Endothelial cell of umbilical vein (primary cell): ENCODE measurements at regions of chr18 and their contacts with region 1.

Region 1: DNA sequence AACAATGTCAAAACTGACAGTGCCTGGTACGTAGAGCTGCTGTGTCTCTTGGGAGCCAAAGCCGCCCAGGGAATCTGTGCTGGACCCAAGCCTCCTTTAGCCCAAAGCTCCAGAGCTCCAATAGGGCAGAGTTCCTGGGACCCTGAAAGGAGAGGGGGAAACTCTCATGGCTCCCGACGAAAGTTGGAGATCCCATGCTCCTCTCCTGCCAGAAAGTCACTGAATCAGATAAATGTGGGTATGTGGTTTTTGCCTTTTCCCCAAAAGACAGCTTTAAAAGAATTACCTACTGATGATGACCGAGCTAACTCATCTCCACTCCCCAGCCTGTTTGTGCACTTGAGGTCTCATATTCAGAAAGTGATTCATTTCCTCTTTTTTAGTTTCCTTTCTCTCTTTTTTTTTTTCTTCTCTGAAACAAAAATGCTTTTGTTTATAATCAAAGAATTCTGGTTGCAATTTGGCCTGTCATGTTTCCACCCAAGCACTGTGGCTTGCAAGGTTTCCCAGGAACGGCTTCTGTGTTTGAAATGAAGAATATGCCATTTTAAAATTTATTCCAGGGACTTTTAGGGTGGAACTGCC is 14.1 kb upstream of the PMAIP1 start:
- DNase-seq: peak; percentile 72
- H3K4me3 ChIP-seq: peak overlapping the region in 1 of 3 experiments; percentile 39
- H3K27ac ChIP-seq: peak overlapping the region; percentile 89
- H3K4me1 ChIP-seq: peaks cover 41% of the 10 kb centered on the region
- H3K27me3 ChIP-seq: no peaks in the 10 kb centered on the region
- CTCF ChIP-seq: no peak
- POLR2A ChIP-seq: no peak

Region 2: GRCh38 chr18:58998401-58999203 is 887.1 kb before region 1 on chr18:
- CTCF ChIA-PET with region 1: no interaction called
- POLR2A ChIA-PET with region 1: no interaction called
- dilution Hi-C with region 1: no loop called
- intact Hi-C with region 1: loop called (anchors 5 kb)
- DNase-seq: no peak
- H3K4me3 ChIP-seq: no peak overlapping the region
- H3K27ac ChIP-seq: no peak overlapping the region
- H3K4me1 ChIP-seq: peaks cover 23% of the 10 kb centered on the region
- H3K27me3 ChIP-seq: no peaks in the 10 kb centered on the region
- CTCF ChIP-seq: no peak
- POLR2A ChIP-seq: no peak

Region 3: DNA sequence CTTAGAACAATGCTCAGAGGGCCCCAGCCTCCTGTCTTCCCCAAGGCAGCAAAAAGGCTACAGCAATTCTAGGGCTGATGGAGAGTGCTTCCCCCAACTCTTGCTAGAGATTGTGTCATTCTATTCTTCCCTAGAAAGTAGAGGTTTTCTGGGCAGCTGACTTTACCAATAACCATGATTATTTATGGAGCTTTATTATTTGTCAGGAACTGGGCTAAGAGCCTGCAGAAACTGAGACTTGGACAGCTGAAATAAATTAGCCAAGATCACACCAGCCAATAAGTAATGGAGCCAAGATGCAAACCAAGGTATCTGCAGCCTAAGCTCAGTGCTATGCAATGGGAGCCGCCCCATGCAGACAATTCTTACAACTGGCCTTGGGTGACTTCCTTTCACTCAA is 273.3 kb before region 1 on chr18:
- CTCF ChIA-PET with region 1: no interaction called
- POLR2A ChIA-PET with region 1: no interaction called
- dilution Hi-C with region 1: no loop called
- intact Hi-C with region 1: no loop called
- DNase-seq: no peak
- H3K4me3 ChIP-seq: no peak overlapping the region
- H3K27ac ChIP-seq: no peak overlapping the region
- H3K4me1 ChIP-seq: no peaks in the 10 kb centered on the region
- H3K27me3 ChIP-seq: no peaks in the 10 kb centered on the region
- CTCF ChIP-seq: no peak
- POLR2A ChIP-seq: no peak

Region 4: GRCh38 chr18:59874166-59874565 is 11.5 kb before region 1 on chr18:
- CTCF ChIA-PET with region 1: interaction called, 9 read pairs
- POLR2A ChIA-PET with region 1: interaction called, 3 read pairs
- dilution Hi-C with region 1: no loop called
- intact Hi-C with region 1: loop called (anchors 1 kb)
- DNase-seq: peak; percentile 73
- H3K4me3 ChIP-seq: peak overlapping the region in 1 of 3 experiments; percentile 6
- H3K27ac ChIP-seq: peak overlapping the region; percentile 85
- H3K4me1 ChIP-seq: peaks cover 19% of the 10 kb centered on the region
- H3K27me3 ChIP-seq: no peaks in the 10 kb centered on the region
- CTCF ChIP-seq: no peak
- POLR2A ChIP-seq: no peak

Region 5: DNA sequence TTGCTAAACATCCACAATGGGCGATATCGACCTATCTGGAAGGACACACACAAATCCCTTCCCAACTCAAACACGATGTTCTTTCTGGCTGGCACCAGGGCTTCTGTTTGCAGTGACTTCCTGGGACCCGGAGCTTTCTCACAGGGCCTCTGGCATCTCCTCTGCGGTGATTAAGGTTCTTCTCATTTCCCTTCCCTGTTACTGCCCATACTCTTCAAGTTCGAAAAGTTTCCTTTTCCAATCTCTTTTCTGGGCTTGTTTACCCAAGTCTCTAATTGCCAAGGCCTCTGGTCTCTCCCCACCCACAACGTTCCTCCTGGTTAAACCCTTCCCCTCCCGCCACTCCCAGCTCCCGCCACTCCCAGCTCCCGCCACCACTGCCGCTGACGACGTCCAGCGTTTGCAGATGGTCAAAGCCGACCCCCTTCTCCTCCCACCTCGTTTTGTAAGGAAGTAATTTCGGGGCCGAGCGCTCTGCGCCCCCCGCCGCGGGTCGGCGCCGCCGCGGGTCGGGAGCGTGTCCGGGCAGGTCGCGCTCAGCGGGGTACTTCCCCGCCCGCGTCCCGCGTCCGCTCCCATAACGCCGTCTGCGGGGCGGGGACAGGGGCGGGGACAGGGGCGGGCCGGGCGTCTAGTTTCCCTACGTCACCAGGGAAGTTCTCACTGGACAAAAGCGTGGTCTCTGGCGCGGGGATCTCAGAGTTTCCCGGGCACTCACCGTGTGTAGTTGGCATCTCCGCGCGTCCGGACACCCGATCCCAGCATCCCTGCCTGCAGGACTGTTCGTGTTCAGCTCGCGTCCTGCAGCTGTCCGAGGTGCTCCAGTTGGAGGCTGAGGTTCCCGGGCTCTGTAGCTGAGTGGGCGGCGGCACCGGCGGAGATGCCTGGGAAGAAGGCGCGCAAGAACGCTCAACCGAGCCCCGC is 13.9 kb after region 1 on chr18 and contains the start of gene PMAIP1:
- CTCF ChIA-PET with region 1: interaction called, 14 read pairs
- POLR2A ChIA-PET with region 1: interaction called, 60 read pairs
- dilution Hi-C with region 1: no loop called
- intact Hi-C with region 1: loop called (anchors 1 kb)
- DNase-seq: peak; percentile 91
- H3K4me3 ChIP-seq: peak within 1 kb of the TSS; percentile 58 to 88 (median 76)
- H3K27ac ChIP-seq: peak within 1 kb of the TSS; percentile 75
- H3K4me1 ChIP-seq: peaks cover 27% of the 10 kb centered on the region
- H3K27me3 ChIP-seq: peaks cover 1 to 9% of the 10 kb centered on the region in 2 experiments
- CTCF ChIP-seq: no peak
- POLR2A ChIP-seq: peak; percentile 99
- total RNA-seq, gene PMAIP1: 11.9 and 13.5 TPM in 2 replicates

Region 6: DNA sequence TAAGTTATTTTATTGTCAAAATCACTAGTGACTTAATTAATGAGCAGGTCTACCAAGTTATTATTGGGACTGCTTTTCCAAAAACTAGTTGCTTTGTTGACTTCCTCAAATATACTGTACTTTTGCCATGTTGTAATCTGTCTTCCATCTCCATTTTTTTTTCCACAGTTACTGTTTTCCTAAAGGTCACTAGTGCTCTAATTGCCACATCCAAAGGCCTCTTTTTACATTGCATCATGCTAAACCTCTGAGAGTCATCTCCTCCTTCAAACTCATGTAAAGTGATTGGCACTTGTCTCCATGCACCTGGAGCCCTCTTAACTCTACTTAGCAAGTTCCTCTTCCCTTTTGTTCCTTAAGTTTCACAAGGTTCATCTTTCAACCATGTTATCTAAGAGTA is 25.9 kb after region 1 on chr18:
- CTCF ChIA-PET with region 1: no interaction called
- POLR2A ChIA-PET with region 1: no interaction called
- dilution Hi-C with region 1: no loop called
- intact Hi-C with region 1: no loop called
- DNase-seq: no peak
- H3K4me3 ChIP-seq: no peak overlapping the region
- H3K27ac ChIP-seq: no peak overlapping the region
- H3K4me1 ChIP-seq: peaks cover 8% of the 10 kb centered on the region
- H3K27me3 ChIP-seq: peaks cover 1 to 8% of the 10 kb centered on the region in 2 experiments
- CTCF ChIP-seq: no peak
- POLR2A ChIP-seq: no peak